ENCODE measurements at regions of chrX and their contacts with region 1.

Region 1: DNA sequence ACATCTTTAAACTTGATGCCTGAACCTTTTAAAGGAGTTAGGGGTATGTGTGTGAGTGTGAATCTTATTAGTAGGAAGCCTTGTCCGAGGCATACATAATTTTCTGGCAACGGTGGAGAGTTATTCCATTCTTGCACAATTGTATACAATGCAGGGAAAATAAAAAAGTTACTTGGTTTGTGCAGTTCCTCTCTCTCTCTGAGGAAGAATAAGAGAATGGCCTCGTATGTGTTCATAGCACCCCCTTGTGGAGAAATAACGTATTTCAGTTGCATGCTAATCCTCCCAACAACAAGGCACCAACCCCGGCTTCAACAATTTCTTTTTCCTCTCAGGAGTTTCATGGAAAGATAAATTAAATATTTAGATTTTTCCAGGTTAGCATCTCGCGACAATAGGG is 33.7 kb upstream of the FGF13 start:
- DNase-seq: no peak
- ATAC-seq: peak in 1 of 4 donors; percentile 61
- H3K4me3 ChIP-seq: no peak overlapping the region
- H3K27ac ChIP-seq: no peak overlapping the region
- H3K4me1 ChIP-seq: no peaks in the 10 kb centered on the region
- H3K27me3 ChIP-seq: peaks cover 0 to 37% (median 0%) of the 10 kb centered on the region in 9 donors
- CTCF ChIP-seq: peak; percentile 45 to 82 (median 63)
- POLR2A ChIP-seq: no peak

Region 2: DNA sequence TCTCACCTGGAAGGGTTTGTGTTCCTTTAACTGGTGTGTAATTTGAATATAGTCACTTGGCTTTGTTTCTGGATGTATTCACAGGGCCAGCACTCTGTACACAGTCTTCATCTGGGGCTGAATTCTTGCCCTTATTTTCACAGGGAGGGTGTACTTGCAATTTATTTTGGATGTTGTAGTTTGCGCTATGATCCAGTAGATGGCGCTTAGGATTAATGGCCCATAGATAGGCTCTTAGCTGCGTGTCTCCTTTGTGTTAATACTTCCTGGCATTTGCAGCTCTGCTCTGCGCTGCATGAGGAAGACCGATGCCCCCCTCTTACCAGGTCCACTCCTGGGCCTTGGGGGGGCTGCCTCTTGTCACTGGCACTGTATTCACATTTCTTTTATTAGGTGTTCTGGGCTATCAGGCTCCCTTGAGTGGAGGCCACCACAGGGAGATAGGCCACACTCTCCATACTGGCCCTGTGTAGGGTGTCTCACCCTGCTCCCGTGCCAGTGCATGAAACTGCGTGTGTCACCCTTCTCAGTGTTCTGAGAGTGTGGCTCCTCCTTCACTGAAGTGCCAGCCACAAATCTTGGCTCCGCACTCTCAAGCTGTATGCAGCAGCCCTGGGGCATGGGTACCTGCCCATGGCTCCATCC is 617.0 kb before region 1 on chrX:
- intact Hi-C with region 1: loop called in 7 of 10 experiments (anchors 2 to 10 kb)
- DNase-seq: no peak
- ATAC-seq: peak in 3 of 4 donors; percentile 34 to 61 (median 47)
- H3K4me3 ChIP-seq: no peak overlapping the region
- H3K27ac ChIP-seq: no peak overlapping the region
- H3K4me1 ChIP-seq: no peaks in the 10 kb centered on the region
- H3K27me3 ChIP-seq: peaks cover 0 to 19% (median 0%) of the 10 kb centered on the region in 9 donors
- CTCF ChIP-seq: peak; percentile 31 to 61 (median 50)
- POLR2A ChIP-seq: no peak

Region 3: GRCh38 chrX:138191998-138192397 is 553.2 kb before region 1 on chrX:
- intact Hi-C with region 1: loop called in 8 of 10 experiments (anchors 1 to 10 kb)
- DNase-seq: peak in 1 of 5 donors; percentile 21
- ATAC-seq: no peak
- H3K4me3 ChIP-seq: no peak overlapping the region
- H3K27ac ChIP-seq: no peak overlapping the region
- H3K4me1 ChIP-seq: no peaks in the 10 kb centered on the region
- H3K27me3 ChIP-seq: peaks cover 0 to 7% (median 0%) of the 10 kb centered on the region in 9 donors
- CTCF ChIP-seq: peak in 10 of 12 donors; percentile 10 to 47 (median 31)
- POLR2A ChIP-seq: no peak

Region 4: DNA sequence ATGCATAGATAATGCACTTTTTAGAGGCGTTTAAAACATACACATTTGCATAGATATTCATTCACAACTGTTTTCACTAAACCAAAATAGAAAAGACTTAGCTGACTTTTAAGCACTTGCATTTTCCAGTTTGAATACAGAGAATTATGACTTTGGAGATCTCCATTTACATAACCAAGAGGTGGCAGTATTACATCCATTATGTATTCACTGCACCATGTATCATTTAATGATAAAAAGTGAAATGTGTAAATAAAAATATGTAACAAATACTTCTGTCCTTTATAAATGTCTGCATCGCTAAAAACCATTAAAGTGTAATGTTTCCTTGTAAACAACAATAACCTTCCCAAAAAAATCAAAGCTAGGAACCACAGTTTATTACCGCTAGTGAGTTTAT is 446.9 kb before region 1 on chrX:
- intact Hi-C with region 1: loop called in 2 of 10 experiments (anchors 5 to 10 kb)
- DNase-seq: no peak
- ATAC-seq: no peak
- H3K4me3 ChIP-seq: no peak overlapping the region
- H3K27ac ChIP-seq: no peak overlapping the region
- H3K4me1 ChIP-seq: no peaks in the 10 kb centered on the region
- H3K27me3 ChIP-seq: no peaks in the 10 kb centered on the region
- CTCF ChIP-seq: peak in 2 of 12 donors; percentile 7 to 16
- POLR2A ChIP-seq: no peak